Activated CD4-positive, alpha-beta T cell treated with anti-CD3 and anti-CD28 coated beads, Interleukin-2, amount 10 ng/mL, durations not matched to agents 7 days and 5 days (primary cell): ENCODE measurements at regions of chr1 and their contacts with region 1.

Region 1: GRCh38 chr1:34844252-34844634 is 15.3 kb downstream of the SMIM12 start:
- DNase-seq: no peak
- H3K4me3 Mint-ChIP-seq: no peak overlapping the region
- H3K27ac Mint-ChIP-seq: no peak overlapping the region
- H3K4me1 Mint-ChIP-seq: peaks cover 8% of the 10 kb centered on the region
- H3K27me3 Mint-ChIP-seq: no peaks in the 10 kb centered on the region

Region 2: GRCh38 chr1:34781071-34781843 is 63.0 kb before region 1 on chr1 and contains the start of gene GJB3:
- CTCF ChIA-PET with region 1: no interaction called
- POLR2A ChIA-PET with region 1: no interaction called
- DNase-seq: no peak
- H3K4me3 Mint-ChIP-seq: no peak within 1 kb of the TSS
- H3K27ac Mint-ChIP-seq: no peak within 1 kb of the TSS
- H3K4me1 Mint-ChIP-seq: no peaks in the 10 kb centered on the region
- H3K27me3 Mint-ChIP-seq: peaks cover 38% of the 10 kb centered on the region
- total RNA-seq, gene GJB3: not detected

Region 3: GRCh38 chr1:34816778-34817177 is 27.5 kb before region 1 on chr1:
- CTCF ChIA-PET with region 1: no interaction called
- POLR2A ChIA-PET with region 1: no interaction called
- DNase-seq: no peak
- H3K4me3 Mint-ChIP-seq: no peak overlapping the region
- H3K27ac Mint-ChIP-seq: no peak overlapping the region
- H3K4me1 Mint-ChIP-seq: no peaks in the 10 kb centered on the region
- H3K27me3 Mint-ChIP-seq: no peaks in the 10 kb centered on the region

Region 4: DNA sequence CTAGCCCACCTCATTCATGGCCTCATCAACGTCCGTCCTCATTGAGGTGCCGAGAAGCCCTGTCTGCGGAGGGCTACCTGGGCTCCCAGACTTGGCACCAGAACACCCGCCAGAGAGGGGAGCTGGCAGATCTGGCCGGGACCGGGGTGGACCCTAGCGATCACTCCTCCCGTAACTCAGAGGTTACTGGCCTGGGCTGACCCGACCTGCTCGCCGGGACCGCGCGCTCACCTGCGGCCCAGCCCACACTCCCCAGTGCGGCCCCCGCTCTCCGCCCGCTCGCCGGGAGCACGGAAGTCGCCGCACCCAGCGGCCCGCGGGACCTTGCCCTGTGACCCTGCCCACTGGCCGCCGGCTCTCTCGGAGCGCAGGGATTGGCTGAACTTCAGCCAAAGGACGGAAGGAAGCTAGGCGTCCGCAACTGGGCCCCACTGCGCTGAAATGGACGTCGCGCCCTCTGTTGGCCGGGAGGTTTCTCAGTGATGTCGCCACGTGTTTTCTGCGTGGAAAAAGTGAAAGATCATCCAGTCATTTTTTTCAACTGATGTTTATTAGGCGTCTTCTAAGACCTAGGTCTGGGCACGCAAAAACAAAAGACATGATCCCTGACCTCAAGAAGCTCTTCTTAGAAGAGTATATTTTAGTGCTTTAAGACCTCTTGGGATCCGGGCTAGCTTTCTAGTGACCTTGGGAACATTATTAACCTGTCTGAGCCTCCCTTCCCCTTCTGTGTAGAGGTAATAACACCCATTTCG is 15.4 kb after region 1 on chr1 and contains the start of gene SMIM12:
- CTCF ChIA-PET with region 1: interaction called, 10 read pairs
- POLR2A ChIA-PET with region 1: no interaction called
- DNase-seq: peak; percentile 91
- H3K4me3 Mint-ChIP-seq: peak within 1 kb of the TSS; percentile 97
- H3K27ac Mint-ChIP-seq: peak within 1 kb of the TSS; percentile 93
- H3K4me1 Mint-ChIP-seq: peaks cover 60% of the 10 kb centered on the region
- H3K27me3 Mint-ChIP-seq: no peaks in the 10 kb centered on the region
- total RNA-seq, gene SMIM12: 44.4 to 54.8 TPM